Mammary epithelial cell (primary cell): ENCODE measurements at regions of chr13 and their contacts with region 1.

Region 1: DNA sequence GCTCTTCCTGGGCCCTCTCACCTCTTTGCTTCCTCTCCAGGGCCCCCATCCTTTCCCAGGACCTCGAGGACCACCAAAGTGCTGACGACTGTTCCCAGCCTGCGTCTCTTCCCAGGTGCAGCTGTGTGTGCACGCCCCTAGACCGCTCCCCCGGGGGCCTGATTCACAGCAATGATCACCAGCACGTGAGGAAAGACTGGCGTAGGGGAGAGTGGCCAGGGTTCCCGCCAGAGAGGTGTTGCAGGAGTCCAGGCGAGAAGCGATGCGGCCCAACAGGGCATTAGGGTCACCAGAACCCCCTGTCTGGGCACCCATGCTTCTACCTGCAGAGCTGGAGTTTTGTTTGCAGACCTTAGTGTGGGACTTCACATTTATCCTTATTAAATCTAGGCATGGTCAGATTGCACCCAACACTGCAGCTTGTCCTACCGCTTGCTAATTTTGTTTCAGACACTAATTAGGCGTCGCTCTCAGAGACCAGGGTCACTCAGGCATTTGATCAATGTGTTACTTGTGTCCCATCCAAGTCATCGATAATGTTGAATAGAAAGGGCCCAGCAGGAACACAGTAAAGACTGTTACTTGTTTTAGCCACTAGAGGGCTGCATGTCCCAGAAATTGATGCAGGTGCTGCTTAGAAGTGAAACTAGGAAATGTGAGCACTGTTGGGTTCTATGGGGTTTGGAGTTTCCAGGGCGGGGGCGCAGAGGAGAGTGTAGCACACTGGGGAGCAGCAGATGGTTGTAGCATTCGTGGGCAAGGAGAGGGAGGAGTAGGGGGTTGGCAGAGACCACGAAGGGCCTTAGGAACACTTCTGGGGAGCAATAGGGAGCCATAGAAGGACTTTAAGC is 53.2 kb downstream of the CDADC1 start:
- DNase-seq: peak; percentile 70
- H3K4me3 ChIP-seq: no peak overlapping the region
- H3K27ac ChIP-seq: no peak overlapping the region
- H3K4me1 ChIP-seq: peaks cover 20% of the 10 kb centered on the region
- H3K27me3 ChIP-seq: no peaks in the 10 kb centered on the region
- CTCF ChIP-seq: peak; percentile 86 to 93

Region 2: GRCh38 chr13:48775804-48776203 is 525.2 kb before region 1 on chr13:
- CTCF ChIA-PET with region 1: no interaction called
- dilution Hi-C with region 1: no loop called
- in situ Hi-C with region 1: no loop called
- intact Hi-C with region 1: no loop called
- DNase-seq: peak; percentile 86
- H3K4me3 ChIP-seq: no peak overlapping the region
- H3K27ac ChIP-seq: no peak overlapping the region
- H3K4me1 ChIP-seq: peaks cover 21% of the 10 kb centered on the region
- H3K27me3 ChIP-seq: no peaks in the 10 kb centered on the region
- CTCF ChIP-seq: no peak

Region 3: DNA sequence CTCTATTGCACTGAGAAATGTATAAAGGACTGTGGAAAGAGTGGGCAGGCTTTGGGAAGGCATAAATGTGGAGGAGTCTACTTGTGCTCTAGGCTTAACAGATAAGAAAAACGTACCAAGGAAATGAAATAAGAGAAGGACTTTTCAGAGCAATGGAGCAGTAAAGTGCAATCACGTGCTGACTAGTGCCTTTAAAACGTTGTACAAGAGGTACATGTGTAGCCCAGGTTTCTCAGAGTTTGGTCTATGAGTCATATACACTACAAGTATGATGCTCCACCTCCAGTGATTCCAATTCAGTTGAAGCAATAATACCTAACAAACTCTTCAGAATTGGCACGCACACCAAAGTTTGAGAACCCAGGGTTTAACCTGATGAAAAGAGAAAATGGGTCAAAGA is 338.7 kb before region 1 on chr13:
- CTCF ChIA-PET with region 1: no interaction called
- dilution Hi-C with region 1: no loop called
- in situ Hi-C with region 1: no loop called
- intact Hi-C with region 1: no loop called
- DNase-seq: peak; percentile 70
- H3K4me3 ChIP-seq: no peak overlapping the region
- H3K27ac ChIP-seq: no peak overlapping the region
- H3K4me1 ChIP-seq: no peaks in the 10 kb centered on the region
- H3K27me3 ChIP-seq: no peaks in the 10 kb centered on the region
- CTCF ChIP-seq: no peak

Region 4: DNA sequence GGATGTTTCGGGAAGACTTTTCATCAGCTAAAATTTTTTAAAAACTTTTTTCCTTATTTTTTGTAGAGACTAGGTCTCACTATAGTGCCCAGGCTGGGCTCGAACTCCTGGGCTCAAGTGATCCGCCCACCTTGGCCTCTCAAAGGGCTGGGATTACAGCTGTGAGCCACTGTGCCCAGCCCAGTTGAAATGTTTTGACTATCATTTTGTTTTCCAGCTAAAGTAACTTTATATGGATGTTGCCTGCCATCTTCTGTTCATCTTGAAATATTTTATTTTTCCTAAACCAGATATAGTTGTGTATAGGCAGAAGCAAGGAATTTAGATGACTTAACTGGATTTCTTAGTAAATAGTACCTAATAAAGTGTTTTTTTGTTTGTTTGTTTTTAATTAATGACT is 135.9 kb after region 1 on chr13:
- CTCF ChIA-PET with region 1: no interaction called
- dilution Hi-C with region 1: no loop called
- in situ Hi-C with region 1: loop called (anchors 10 kb)
- intact Hi-C with region 1: loop called (anchors 1 kb)
- DNase-seq: peak; percentile 29
- H3K4me3 ChIP-seq: no peak overlapping the region
- H3K27ac ChIP-seq: no peak overlapping the region
- H3K4me1 ChIP-seq: no peaks in the 10 kb centered on the region
- H3K27me3 ChIP-seq: no peaks in the 10 kb centered on the region
- CTCF ChIP-seq: no peak

Region 5: DNA sequence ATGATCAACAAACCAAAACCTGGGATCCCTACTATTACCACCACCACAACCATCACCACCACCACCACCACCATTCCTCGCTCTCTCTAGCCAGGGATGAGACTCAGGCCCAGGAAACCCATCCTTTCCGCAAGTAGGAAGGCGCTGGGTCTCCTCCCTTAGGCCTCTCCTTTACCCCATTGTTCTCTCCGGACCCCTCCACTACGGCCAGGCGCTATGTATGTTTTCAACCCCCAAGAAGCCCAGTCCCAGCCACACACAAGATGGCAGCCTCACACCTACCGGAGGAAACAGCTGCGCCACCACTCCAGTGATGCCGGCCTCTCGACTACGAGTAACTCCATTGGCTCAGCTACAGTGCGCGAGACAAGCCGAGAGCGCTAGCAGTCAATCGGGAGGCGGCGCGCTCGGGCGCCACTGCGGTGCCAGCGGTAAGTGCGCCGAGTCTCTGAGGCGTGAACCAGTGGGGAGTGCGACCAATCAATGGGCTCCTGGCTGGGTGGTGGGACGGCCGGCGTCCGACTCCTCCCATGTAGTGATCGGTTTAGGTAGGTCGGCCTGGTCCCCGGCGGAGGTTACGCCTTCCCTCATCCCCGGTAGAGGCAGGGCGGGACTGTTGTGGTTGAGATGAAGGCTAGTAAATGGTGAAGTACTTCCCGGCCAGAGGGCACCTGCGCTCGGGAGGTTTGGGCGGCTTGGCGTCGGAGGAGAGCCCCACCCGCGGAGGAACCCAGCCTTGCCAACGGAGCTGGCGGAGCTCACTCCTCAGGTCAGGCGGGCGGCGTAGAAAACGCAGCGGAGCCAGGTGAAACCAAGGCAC is 142.9 kb after region 1 on chr13 and contains the starts of genes CAB39L and SETDB2:
- CTCF ChIA-PET with region 1: no interaction called
- dilution Hi-C with region 1: no loop called
- in situ Hi-C with region 1: loop called (anchors 10 kb)
- intact Hi-C with region 1: loop called (anchors 2 kb)
- DNase-seq: peak; percentile 100
- H3K4me3 ChIP-seq: peak within 1 kb of the TSS; percentile 69 to 95 (median 70)
- H3K27ac ChIP-seq: peak within 1 kb of the TSS; percentile 72
- H3K4me1 ChIP-seq: peaks cover 2% of the 10 kb centered on the region
- H3K27me3 ChIP-seq: no peaks in the 10 kb centered on the region
- CTCF ChIP-seq: peak; percentile 22 to 55
- total RNA-seq, gene CAB39L: 5.7 to 8.0 TPM
- total RNA-seq, gene SETDB2: 8.1 to 10.2 TPM

Region 6: DNA sequence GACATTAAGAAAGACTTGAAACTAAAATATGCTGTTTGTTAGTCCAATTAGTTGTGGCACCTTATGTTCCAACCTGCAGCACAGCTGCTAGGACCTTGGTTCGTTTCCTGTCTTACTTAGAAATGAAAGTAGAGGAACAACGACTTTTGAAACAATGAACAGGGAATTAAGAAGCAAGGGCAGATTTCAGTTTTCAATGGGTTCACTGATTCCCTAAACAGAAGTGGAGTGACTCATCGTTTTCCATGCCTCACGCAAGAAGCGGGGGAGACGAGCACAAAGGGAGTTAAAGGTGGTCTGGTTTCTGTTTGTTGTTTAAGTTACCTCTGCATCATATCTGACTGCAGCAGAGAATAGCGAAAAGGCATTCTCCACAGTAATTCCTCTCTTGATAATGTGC is 239.6 kb after region 1 on chr13:
- CTCF ChIA-PET with region 1: no interaction called
- dilution Hi-C with region 1: no loop called
- in situ Hi-C with region 1: no loop called
- intact Hi-C with region 1: loop called (anchors 10 kb)
- DNase-seq: no peak
- H3K4me3 ChIP-seq: no peak overlapping the region
- H3K27ac ChIP-seq: no peak overlapping the region
- H3K4me1 ChIP-seq: no peaks in the 10 kb centered on the region
- H3K27me3 ChIP-seq: no peaks in the 10 kb centered on the region
- CTCF ChIP-seq: no peak